ENCODE measurements at regions of chr12 and their contacts with region 1.

Region 1: GRCh38 chr12:104958009-104958945 is at the start of gene SLC41A2:
- DNase-seq: peak; percentile 77 to 89
- H3K4me3 ChIP-seq: peak within 1 kb of the TSS; percentile 94
- H3K4me3 Mint-ChIP-seq: peak within 1 kb of the TSS; percentile 94
- H3K27ac Mint-ChIP-seq: peak within 1 kb of the TSS; percentile 94
- H3K4me1 ChIP-seq: peaks cover 28% of the 10 kb centered on the region
- H3K4me1 Mint-ChIP-seq: peaks cover 20% of the 10 kb centered on the region
- H3K27me3 ChIP-seq: no peaks in the 10 kb centered on the region
- H3K27me3 Mint-ChIP-seq: no peaks in the 10 kb centered on the region
- CTCF ChIP-seq: peak in 1 of 2 experiments; percentile 10
- total RNA-seq, gene SLC41A2: 21.6 and 24.9 TPM in 2 replicates

Region 2: GRCh38 chr12:104615048-104615561 is 343.2 kb before region 1 on chr12:
- CTCF ChIA-PET with region 1: no interaction called
- POLR2A ChIA-PET with region 1: no interaction called
- intact Hi-C with region 1: no loop called
- DNase-seq: no peak
- H3K4me3 ChIP-seq: no peak overlapping the region
- H3K4me3 Mint-ChIP-seq: no peak overlapping the region
- H3K27ac Mint-ChIP-seq: no peak overlapping the region
- H3K4me1 ChIP-seq: no peaks in the 10 kb centered on the region
- H3K4me1 Mint-ChIP-seq: no peaks in the 10 kb centered on the region
- H3K27me3 ChIP-seq: no peaks in the 10 kb centered on the region
- H3K27me3 Mint-ChIP-seq: no peaks in the 10 kb centered on the region
- CTCF ChIP-seq: no peak

Region 3: GRCh38 chr12:104671407-104672098 is 286.7 kb before region 1 on chr12:
- CTCF ChIA-PET with region 1: no interaction called
- POLR2A ChIA-PET with region 1: no interaction called
- intact Hi-C with region 1: loop called (anchors 10 kb)
- DNase-seq: no peak
- H3K4me3 ChIP-seq: no peak overlapping the region
- H3K4me3 Mint-ChIP-seq: no peak overlapping the region
- H3K27ac Mint-ChIP-seq: no peak overlapping the region
- H3K4me1 ChIP-seq: peaks cover 10% of the 10 kb centered on the region
- H3K4me1 Mint-ChIP-seq: peaks cover 8% of the 10 kb centered on the region
- H3K27me3 ChIP-seq: no peaks in the 10 kb centered on the region
- H3K27me3 Mint-ChIP-seq: no peaks in the 10 kb centered on the region
- CTCF ChIP-seq: no peak

Region 4: GRCh38 chr12:104769144-104769561 is 189.1 kb before region 1 on chr12:
- CTCF ChIA-PET with region 1: no interaction called
- POLR2A ChIA-PET with region 1: interaction called, 10 read pairs
- intact Hi-C with region 1: no loop called
- DNase-seq: no peak
- H3K4me3 ChIP-seq: no peak overlapping the region
- H3K4me3 Mint-ChIP-seq: no peak overlapping the region
- H3K27ac Mint-ChIP-seq: no peak overlapping the region
- H3K4me1 ChIP-seq: no peaks in the 10 kb centered on the region
- H3K4me1 Mint-ChIP-seq: no peaks in the 10 kb centered on the region
- H3K27me3 ChIP-seq: no peaks in the 10 kb centered on the region
- H3K27me3 Mint-ChIP-seq: peaks cover 8% of the 10 kb centered on the region
- CTCF ChIP-seq: no peak

Region 5: DNA sequence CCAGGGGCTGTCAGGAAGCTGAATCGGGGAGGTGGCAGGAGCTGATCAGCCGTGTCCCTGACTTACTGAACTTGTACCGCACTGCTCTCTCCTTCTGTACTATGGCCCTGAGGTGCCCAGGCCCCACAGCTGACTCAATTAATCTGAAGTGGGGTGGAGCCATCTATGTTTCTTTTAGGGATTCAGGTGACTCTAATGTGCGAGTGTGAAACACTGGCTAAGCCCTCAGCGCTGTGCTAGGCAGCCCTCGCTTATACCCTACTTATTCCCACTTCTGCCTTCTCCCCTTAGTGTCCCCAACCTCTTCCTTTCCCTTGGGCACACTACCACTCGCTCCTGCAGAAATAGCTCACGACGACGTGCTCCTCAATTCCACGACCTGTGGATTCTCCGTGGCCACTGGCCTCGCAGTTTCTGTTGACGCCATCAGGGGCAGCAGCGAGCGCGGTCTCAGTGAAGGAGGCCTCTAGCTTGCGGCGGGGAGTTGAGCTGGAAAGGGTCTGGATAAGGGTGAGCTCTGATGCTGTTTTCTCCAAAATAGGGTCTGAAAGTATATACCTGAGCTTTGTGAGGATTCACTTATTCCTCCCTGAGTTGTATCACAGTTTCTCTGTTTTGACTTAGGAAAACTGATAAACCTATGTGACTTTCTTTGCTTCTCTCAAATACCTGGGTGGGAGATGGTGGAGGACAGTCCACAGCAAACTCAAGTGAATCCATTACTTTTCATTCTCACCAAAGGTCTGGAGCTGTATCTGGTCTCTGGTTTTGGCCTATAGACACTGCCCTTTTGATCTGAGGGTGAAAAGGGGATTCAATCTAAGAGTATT is 167.8 kb before region 1 on chr12:
- CTCF ChIA-PET with region 1: no interaction called
- POLR2A ChIA-PET with region 1: no interaction called
- intact Hi-C with region 1: loop called (anchors 10 kb)
- DNase-seq: peak; percentile 39 to 54
- H3K4me3 ChIP-seq: no peak overlapping the region
- H3K4me3 Mint-ChIP-seq: no peak overlapping the region
- H3K27ac Mint-ChIP-seq: no peak overlapping the region
- H3K4me1 ChIP-seq: no peaks in the 10 kb centered on the region
- H3K4me1 Mint-ChIP-seq: no peaks in the 10 kb centered on the region
- H3K27me3 ChIP-seq: no peaks in the 10 kb centered on the region
- H3K27me3 Mint-ChIP-seq: no peaks in the 10 kb centered on the region
- CTCF ChIP-seq: peak; percentile 67 to 71

Region 6: GRCh38 chr12:104825408-104825807 is 132.9 kb before region 1 on chr12:
- CTCF ChIA-PET with region 1: no interaction called
- POLR2A ChIA-PET with region 1: no interaction called
- intact Hi-C with region 1: no loop called
- DNase-seq: no peak
- H3K4me3 ChIP-seq: no peak overlapping the region
- H3K4me3 Mint-ChIP-seq: no peak overlapping the region
- H3K27ac Mint-ChIP-seq: no peak overlapping the region
- H3K4me1 ChIP-seq: no peaks in the 10 kb centered on the region
- H3K4me1 Mint-ChIP-seq: no peaks in the 10 kb centered on the region
- H3K27me3 ChIP-seq: no peaks in the 10 kb centered on the region
- H3K27me3 Mint-ChIP-seq: no peaks in the 10 kb centered on the region
- CTCF ChIP-seq: no peak

Region 7: GRCh38 chr12:104986022-104986941 is 28.0 kb after region 1 on chr12 and contains the start of gene NOPCHAP1:
- CTCF ChIA-PET with region 1: no interaction called
- POLR2A ChIA-PET with region 1: no interaction called
- intact Hi-C with region 1: loop called (anchors 1 kb)
- DNase-seq: peak; percentile 93 to 95
- H3K4me3 ChIP-seq: peak within 1 kb of the TSS; percentile 80
- H3K4me3 Mint-ChIP-seq: peak within 1 kb of the TSS; percentile 88
- H3K27ac Mint-ChIP-seq: peak within 1 kb of the TSS; percentile 79
- H3K4me1 ChIP-seq: peaks cover 7% of the 10 kb centered on the region; the same call in 1 of the 2 replicates
- H3K4me1 Mint-ChIP-seq: peaks cover 20% of the 10 kb centered on the region
- H3K27me3 ChIP-seq: no peaks in the 10 kb centered on the region
- H3K27me3 Mint-ChIP-seq: no peaks in the 10 kb centered on the region
- CTCF ChIP-seq: no peak
- total RNA-seq, gene NOPCHAP1: 23.0 TPM in 2 replicates

Region 8: DNA sequence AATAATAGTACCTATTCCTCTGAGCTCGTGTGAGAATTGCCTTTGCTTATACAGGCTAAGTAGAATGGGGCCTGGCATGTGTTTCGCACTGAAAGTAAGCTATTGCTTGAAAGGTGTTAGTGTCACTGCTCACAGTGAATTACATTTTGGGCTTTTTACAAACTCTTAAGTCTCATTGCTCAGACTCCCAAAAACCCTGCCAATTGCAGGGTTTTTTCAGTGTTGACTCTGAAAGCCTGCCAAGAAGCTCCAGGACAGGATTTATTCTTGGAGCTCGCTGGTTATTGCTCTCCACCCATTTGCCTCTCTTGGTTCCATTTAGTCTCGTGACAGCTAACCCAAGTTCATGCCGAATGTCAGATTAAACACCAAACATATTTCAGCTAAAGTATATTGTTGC is 67.6 kb after region 1 on chr12:
- CTCF ChIA-PET with region 1: no interaction called
- POLR2A ChIA-PET with region 1: no interaction called
- intact Hi-C with region 1: no loop called
- DNase-seq: no peak
- H3K4me3 ChIP-seq: no peak overlapping the region
- H3K4me3 Mint-ChIP-seq: no peak overlapping the region
- H3K27ac Mint-ChIP-seq: no peak overlapping the region
- H3K4me1 ChIP-seq: no peaks in the 10 kb centered on the region
- H3K4me1 Mint-ChIP-seq: peaks cover 5% of the 10 kb centered on the region
- H3K27me3 ChIP-seq: no peaks in the 10 kb centered on the region
- H3K27me3 Mint-ChIP-seq: no peaks in the 10 kb centered on the region
- CTCF ChIP-seq: no peak

Measured in Caco-2 (cell line).